ENCODE measurements at regions of chr7 and their contacts with region 1.

Region 1: DNA sequence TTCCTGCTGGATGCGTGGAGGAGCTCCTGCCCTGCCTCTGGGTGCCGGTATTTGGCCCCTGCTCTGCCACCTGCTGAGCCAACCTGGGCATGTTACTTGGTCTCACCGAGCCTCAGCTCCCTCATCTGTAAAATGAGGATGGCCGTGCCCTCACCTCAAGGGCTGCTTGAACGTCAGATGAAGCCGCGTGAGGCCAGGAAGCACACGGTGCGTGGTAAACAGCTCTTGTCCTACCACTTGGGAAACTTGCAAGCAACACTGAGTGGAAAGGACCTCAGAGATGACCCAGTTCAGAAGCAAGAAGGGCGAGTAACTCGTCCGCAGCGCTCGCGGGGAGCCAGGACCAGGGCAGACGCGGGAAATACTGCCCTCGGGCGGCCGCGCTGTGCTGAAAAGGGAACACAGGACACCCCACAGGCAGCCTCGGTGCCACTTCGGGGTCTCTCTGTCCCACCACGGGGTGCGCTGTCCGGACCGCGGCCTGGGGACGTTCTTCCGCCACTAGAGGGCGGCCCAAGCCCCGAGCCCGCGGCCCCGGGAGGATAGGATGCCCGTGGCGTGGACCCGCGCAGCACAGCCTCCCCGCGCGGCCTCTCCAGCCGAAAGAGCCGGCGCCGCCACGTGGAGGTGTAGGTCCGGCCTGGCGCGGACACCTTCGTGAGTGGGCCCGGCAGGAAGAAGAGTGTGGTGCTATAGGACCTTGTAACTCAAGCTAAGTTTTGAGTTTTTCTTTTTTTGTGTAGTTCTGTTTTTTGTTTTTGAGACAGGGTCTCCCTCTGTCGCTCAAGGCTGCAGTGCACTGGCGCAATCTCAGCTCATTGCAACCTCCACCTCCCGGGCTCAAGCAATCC is 94.1 kb downstream of the PRKAG2 start:
- DNase-seq: peak; percentile 94
- H3K4me3 ChIP-seq: peak overlapping the region; percentile 26 to 48 (median 32)
- H3K27ac ChIP-seq: peak overlapping the region in 1 of 4 donors; percentile 2
- H3K4me1 ChIP-seq: peaks cover 9 to 20% (median 15%) of the 10 kb centered on the region in 4 donors
- H3K27me3 ChIP-seq: no peaks in the 10 kb centered on the region
- CTCF ChIP-seq: peak; percentile 81 to 93 (median 85)
- EP300 ChIP-seq: no peak
- POLR2A ChIP-seq: no peak

Region 2: DNA sequence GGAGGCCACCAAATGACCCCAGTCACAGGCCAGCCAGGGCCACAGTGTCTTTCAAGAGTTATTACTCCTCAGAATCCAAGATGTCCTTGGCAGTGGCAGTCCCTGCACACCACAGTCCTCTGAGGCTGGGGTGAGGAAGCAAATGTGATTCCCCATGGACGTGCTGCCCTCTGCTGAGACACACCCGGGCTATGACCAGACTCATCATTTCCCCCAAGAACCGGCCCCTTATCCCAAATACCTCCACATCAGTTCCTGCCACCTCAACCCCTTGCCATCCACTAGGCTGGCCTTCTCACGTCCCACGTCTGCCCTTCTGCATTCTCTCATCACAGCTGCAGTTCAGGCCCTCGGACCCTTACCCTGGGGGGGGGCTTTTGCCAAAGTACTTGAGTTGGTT is 89.1 kb after region 1 on chr7:
- intact Hi-C with region 1: loop called (anchors 5 kb)
- DNase-seq: no peak
- H3K4me3 ChIP-seq: no peak overlapping the region
- H3K27ac ChIP-seq: no peak overlapping the region
- H3K4me1 ChIP-seq: peaks cover 32 to 65% (median 57%) of the 10 kb centered on the region in 4 donors
- H3K27me3 ChIP-seq: no peaks in the 10 kb centered on the region
- CTCF ChIP-seq: no peak
- EP300 ChIP-seq: no peak
- POLR2A ChIP-seq: no peak

Region 3: GRCh38 chr7:151936207-151936606 is 153.4 kb after region 1 on chr7:
- intact Hi-C with region 1: loop called (anchors 10 kb)
- DNase-seq: no peak
- H3K4me3 ChIP-seq: no peak overlapping the region
- H3K27ac ChIP-seq: peak overlapping the region in 1 of 4 donors; percentile 38
- H3K4me1 ChIP-seq: peaks cover 0 to 18% (median 7%) of the 10 kb centered on the region in 4 donors
- H3K27me3 ChIP-seq: peaks cover 0 to 5% (median 0%) of the 10 kb centered on the region in 4 donors
- CTCF ChIP-seq: no peak
- EP300 ChIP-seq: no peak
- POLR2A ChIP-seq: no peak

Measured in esophagus muscularis mucosa (tissue), 4 donors.